ENCODE measurements at regions of chr1 and their contacts with region 1.

Region 1: DNA sequence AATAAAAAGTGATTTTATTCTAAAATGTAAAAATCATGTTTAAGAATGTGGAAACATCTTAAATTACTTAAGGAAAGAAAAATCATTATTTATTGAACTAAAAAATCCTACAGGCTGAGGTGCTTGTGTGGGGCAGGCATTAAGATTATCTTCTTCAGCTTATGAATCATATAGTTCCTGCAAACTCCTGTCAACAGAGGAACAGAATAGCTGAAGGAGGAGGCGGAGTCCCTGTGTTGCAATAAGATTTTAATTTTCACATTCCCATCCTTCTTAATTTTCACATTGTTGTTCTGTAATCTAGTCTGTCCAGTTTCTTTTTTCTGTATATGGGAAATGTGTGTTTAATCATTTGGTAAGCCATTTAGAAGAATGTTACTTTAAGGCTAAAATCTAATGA is 20.6 kb upstream of the OLFML3 start:
- DNase-seq: no peak
- H3K4me3 ChIP-seq: no peak overlapping the region
- H3K4me3 Mint-ChIP-seq: no peak overlapping the region
- H3K27ac ChIP-seq: no peak overlapping the region
- H3K27ac Mint-ChIP-seq: no peak overlapping the region
- H3K4me1 ChIP-seq: no peaks in the 10 kb centered on the region
- H3K4me1 Mint-ChIP-seq: peaks cover 11% of the 10 kb centered on the region
- H3K27me3 ChIP-seq: no peaks in the 10 kb centered on the region
- H3K27me3 Mint-ChIP-seq: no peaks in the 10 kb centered on the region
- CTCF ChIP-seq: no peak

Region 2: DNA sequence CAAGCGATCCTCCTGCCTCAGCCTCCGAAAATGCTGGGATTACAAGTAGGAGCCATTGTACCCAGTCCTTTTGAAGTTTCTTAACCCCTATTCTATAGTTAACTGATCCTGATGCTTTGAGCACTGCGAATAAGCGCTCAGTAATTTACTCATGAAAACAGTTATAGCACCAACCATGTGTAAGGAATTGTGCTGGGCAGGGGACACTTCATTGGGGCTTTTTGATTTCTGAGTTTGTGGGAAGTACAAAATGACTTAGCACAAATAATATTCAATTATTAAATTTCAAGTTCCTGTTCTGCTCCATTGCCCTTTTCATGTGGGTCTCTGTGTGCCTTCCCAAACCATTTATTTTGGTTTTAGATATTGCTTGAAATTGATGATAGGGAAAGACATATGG is 35.7 kb before region 1 on chr1:
- intact Hi-C with region 1: loop called in 1 of 2 experiments (anchors 5 kb)
- DNase-seq: peak in 1 of 3 donors; percentile 41
- H3K4me3 ChIP-seq: no peak overlapping the region
- H3K4me3 Mint-ChIP-seq: peak overlapping the region in 1 of 2 donors; percentile 63
- H3K27ac ChIP-seq: no peak overlapping the region
- H3K27ac Mint-ChIP-seq: peak overlapping the region in 5 of 7 donors; percentile 18 to 61 (median 60)
- H3K4me1 ChIP-seq: peaks cover 23% of the 10 kb centered on the region in 2 donors
- H3K4me1 Mint-ChIP-seq: peaks cover 25% of the 10 kb centered on the region
- H3K27me3 ChIP-seq: no peaks in the 10 kb centered on the region
- H3K27me3 Mint-ChIP-seq: peaks cover 0 to 5% (median 1%) of the 10 kb centered on the region in 3 donors
- CTCF ChIP-seq: no peak

Measured in CD14-positive monocyte (primary cell).